ENCODE measurements at regions of chr1 and their contacts with region 1.

Region 1: DNA sequence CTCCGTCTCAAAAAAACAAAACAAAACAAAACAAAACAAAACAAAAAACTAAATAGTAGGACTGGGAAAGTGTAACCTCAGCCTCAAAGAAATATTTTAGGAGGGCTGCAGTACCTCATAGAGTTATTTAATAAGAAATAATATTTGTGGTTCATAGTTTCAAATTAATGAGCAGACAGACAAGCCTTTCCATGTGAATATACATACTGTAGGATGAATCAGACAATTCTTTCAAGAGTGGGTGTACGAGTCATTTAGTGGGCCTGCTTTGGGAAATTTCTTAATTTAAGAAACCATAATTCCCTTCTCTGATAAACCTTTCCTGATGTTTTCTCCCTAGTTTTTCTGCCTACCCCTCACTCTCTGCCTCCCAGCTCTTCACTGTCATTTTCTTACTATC is 52.5 kb downstream of the CDC14A start:
- DNase-seq: no peak
- CTCF ChIP-seq: no peak

Region 2: DNA sequence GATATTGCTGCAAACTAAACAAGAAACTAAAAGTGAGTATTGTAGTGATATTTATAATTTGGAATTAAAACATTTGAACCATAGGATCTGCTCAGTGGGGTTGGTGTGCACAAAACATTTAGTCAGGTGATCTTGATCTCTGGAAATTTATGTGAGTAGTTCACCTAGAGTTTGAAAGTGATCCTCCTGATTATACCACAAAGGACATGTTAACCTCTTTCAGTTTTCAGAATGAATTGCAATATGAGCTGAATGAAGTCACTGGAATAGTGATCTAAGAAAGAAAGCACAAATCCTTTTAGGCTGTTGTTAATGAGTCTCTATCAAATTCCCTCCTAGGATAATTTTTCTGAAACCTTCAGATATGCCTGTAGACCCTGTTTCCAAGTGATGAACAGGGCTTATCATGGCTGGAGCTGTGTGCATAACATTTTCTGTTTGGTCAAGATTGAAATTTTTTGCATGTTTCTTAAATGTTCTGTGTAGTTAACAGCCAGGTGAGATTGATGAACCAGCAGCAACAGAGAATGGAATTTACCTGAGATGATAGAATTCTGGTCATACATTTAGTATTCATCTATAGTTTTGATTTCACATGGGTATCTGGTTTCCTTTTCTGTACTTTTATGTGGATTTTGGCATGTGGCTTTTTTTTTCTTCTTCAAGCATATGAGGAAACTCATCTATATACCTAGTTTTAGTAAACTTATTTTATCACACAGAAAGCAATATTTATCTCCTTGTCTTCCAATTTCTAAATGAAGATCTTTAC is 27.0 kb before region 1 on chr1:
- CTCF ChIA-PET with region 1: no interaction called
- POLR2A ChIA-PET with region 1: no interaction called
- DNase-seq: peak; percentile 54
- CTCF ChIP-seq: no peak

Region 3: DNA sequence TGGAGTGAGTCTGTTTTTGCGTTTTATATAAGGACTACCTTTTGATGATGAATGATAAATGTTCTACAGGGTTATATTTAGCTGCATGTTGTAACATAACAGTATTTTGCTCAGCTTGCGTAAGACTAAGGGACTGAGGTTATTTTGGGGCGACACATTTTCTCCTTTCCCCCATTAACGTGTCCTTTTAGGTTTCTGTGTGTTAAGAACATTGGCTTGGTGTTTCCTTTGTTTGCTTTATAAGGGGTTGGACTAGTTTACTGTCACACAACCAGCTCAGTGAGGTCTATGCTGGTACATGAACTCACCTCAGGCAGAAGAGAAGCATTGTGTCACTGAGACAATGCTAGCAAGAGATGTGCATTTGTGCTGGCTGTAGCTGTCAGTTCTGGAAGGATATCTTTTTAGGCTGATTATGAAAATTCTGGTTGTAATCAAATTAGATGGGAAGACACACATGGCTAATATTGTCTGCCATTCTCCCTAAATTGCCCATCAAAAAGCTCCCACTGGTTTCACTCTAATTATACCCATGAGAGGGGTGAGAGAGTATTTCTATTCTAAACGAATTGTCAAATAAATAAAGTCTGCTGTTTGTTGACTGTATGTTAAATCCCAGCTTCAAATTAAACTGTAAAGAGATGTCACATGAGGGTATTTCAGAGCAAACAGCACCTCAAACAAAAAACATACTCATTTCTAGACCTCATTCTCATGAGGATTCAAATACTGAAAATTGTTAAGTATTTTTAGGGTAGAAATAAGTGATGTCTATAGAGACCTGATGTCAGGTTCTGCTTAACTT is 10.1 kb after region 1 on chr1:
- CTCF ChIA-PET with region 1: interaction called, 11 read pairs
- POLR2A ChIA-PET with region 1: no interaction called
- DNase-seq: no peak
- CTCF ChIP-seq: no peak

Measured in GM10248 (cell line).